Lower leg skin (tissue), 4 donors: ENCODE measurements at regions of chr9 and their contacts with region 1.

Region 1: GRCh38 chr9:103661663-103662062 is 432.4 kb upstream of the SMC2 start:
- DNase-seq: no peak
- H3K4me3 ChIP-seq: no peak overlapping the region
- CTCF ChIP-seq: no peak
- POLR2A ChIP-seq: no peak

Region 2: DNA sequence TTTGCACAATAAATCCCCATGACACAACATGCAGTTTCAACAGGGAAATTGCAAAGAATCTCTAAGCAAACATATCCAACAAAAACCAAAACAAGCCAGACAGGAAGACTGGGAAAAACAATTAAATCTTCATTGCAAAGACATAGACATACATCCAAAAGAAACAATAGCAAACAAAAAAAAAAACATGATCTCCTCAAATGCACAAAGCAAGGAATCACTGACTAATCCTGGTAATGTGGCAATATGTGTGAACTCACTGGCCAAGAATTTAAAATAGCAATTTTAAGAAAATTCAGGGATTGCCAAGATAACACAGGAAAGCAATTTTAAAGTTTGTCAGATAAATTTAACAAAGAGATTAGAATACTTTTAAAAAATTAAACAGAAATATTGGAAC is 87.6 kb before region 1 on chr9:
- intact Hi-C with region 1: no loop called
- DNase-seq: no peak
- H3K4me3 ChIP-seq: no peak overlapping the region
- CTCF ChIP-seq: no peak
- POLR2A ChIP-seq: no peak

Region 3: GRCh38 chr9:103649086-103649485 is 12.6 kb before region 1 on chr9:
- intact Hi-C with region 1: loop called (anchors 1 kb)
- DNase-seq: no peak
- H3K4me3 ChIP-seq: no peak overlapping the region
- CTCF ChIP-seq: no peak
- POLR2A ChIP-seq: no peak

Region 4: GRCh38 chr9:104633976-104634520 is 972.4 kb after region 1 on chr9:
- intact Hi-C with region 1: no loop called
- DNase-seq: peak in 1 of 2 donors; percentile 72
- H3K4me3 ChIP-seq: no peak overlapping the region
- CTCF ChIP-seq: no peak
- POLR2A ChIP-seq: no peak